Activated CD8-positive, alpha-beta memory T cell treated with anti-CD3 and anti-CD28 coated beads, Interleukin-2, amount 10 ng/mL, durations not matched to agents 7 days and 5 days (primary cell): ENCODE measurements at regions of chr12 and their contacts with region 1.

Region 1: GRCh38 chr12:52032804-52033502 is 18.3 kb upstream of the NR4A1 start:
- DNase-seq: peak; percentile 97
- ATAC-seq: peak; percentile 94
- H3K4me3 Mint-ChIP-seq: peak overlapping the region; percentile 61
- H3K27ac Mint-ChIP-seq: peak overlapping the region; percentile 64
- H3K4me1 Mint-ChIP-seq: peaks cover 24% of the 10 kb centered on the region
- H3K27me3 Mint-ChIP-seq: peaks cover 18% of the 10 kb centered on the region

Region 2: DNA sequence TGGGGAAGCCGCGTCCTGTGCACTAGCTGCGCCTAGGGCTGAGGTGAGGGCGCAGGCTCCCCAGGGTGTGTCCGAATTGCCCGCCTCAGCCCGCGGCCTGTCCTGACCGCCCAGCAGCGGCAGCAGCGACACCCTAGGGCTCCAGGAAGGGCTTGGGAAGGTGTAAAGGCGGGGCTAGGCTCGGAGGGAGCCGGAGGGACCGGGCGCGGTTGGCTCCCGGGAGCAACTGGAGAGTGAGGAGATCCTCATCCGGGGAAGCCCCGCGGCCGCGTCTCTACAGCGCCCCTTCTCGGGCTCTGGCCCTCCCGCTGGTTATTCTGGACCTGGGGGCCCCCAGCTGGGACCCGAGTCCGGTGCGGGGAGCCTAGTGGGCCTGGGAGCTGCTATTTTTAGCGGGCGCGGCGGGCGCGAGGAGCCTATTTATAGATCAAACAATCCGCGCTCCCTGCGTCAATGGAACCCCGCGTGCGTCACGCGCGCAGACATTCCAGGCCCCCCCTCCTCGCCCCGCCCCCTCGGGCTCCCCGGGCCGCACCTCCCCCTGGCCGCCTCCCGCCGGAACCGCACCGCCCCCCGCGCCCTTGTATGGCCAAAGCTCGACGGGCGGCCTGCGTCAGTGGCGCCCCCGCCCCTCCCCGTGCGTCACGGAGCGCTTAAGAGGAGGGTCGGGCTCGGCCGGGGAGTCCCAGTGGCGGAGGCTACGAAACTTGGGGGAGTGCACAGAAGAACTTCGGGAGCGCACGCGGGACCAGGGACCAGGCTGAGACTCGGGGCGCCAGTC is 18.0 kb after region 1 on chr12 and contains the start of gene NR4A1:
- CTCF ChIA-PET with region 1: interaction called, 12 read pairs
- DNase-seq: peak; percentile 97
- ATAC-seq: peak; percentile 85
- H3K4me3 Mint-ChIP-seq: peak within 1 kb of the TSS; percentile 79
- H3K27ac Mint-ChIP-seq: peak within 1 kb of the TSS; percentile 87
- H3K4me1 Mint-ChIP-seq: peaks cover 41% of the 10 kb centered on the region
- H3K27me3 Mint-ChIP-seq: peaks cover 6% of the 10 kb centered on the region
- total RNA-seq, gene NR4A1: 8.4 to 41.8 TPM

Region 3: GRCh38 chr12:52069327-52070184 is 36.6 kb after region 1 on chr12 and contains the start of gene ATG101:
- CTCF ChIA-PET with region 1: interaction called, 404 read pairs
- DNase-seq: peak; percentile 93
- ATAC-seq: peak; percentile 93
- H3K4me3 Mint-ChIP-seq: peak within 1 kb of the TSS; percentile 95
- H3K27ac Mint-ChIP-seq: peak within 1 kb of the TSS; percentile 98
- H3K4me1 Mint-ChIP-seq: peaks cover 62% of the 10 kb centered on the region
- H3K27me3 Mint-ChIP-seq: no peaks in the 10 kb centered on the region
- total RNA-seq, gene ATG101: 33.3 to 42.2 TPM

Region 4: DNA sequence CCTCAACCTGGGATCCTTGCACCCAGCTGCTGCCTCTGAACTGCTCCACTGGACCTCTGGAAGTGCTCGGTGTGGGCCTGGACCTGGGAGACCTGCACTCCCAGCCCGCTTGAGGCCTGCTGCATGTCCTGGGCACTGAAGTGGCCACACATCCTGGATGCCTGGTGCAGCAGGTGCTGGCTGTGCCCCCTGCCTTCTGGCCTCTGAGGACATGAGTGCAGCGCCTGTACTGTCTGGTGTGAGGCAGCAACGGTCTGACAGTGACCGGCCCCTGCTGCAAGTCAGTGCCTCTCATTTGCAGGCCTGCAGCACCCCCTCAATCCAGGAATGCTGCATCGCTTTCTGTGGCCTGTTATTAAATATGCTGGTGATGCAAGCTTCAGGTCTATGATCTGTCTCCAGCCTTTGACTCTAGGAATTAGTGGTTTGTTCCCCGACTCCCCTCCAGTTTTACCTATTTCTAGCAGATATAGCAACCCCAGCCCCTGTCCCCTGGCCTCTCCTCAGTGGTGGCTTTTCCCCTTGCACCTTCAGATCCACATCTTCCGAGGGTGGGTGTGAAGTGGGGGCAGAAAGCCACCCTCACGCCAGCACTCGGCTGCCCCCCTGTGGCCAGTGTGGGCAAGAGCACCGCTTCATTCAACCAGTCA is 50.2 kb after region 1 on chr12:
- CTCF ChIA-PET with region 1: interaction called, 410 read pairs
- DNase-seq: peak; percentile 75
- ATAC-seq: peak; percentile 78
- H3K4me3 Mint-ChIP-seq: no peak overlapping the region
- H3K27ac Mint-ChIP-seq: no peak overlapping the region
- H3K4me1 Mint-ChIP-seq: peaks cover 4% of the 10 kb centered on the region
- H3K27me3 Mint-ChIP-seq: peaks cover 15% of the 10 kb centered on the region

Region 5: GRCh38 chr12:52121824-52122539 is 89.0 kb after region 1 on chr12:
- CTCF ChIA-PET with region 1: interaction called, 15 read pairs
- DNase-seq: peak; percentile 75
- ATAC-seq: peak; percentile 35
- H3K4me3 Mint-ChIP-seq: no peak overlapping the region
- H3K27ac Mint-ChIP-seq: no peak overlapping the region
- H3K4me1 Mint-ChIP-seq: peaks cover 29% of the 10 kb centered on the region
- H3K27me3 Mint-ChIP-seq: peaks cover 26% of the 10 kb centered on the region

Region 6: DNA sequence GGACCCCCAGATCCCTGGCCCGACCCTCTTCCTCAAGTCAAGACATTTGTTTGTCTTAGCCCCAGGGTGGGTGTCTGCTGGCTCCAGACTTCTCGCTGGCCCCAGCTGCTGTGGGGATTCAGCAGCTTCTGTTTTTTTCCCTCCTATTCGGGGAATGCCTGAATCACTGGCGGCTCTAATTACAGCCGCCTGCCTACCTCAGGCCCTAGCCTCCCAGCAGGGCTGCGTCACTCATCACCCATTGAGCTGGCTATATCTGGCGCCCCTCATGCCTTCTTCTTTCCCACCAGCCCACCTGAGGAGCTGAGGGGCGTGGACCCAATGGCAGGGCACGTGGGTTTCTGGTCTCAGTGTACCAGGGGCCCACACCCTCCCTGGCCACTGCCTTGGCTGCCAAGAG is 148.8 kb after region 1 on chr12:
- CTCF ChIA-PET with region 1: no interaction called
- DNase-seq: no peak
- ATAC-seq: no peak
- H3K4me3 Mint-ChIP-seq: no peak overlapping the region
- H3K27ac Mint-ChIP-seq: no peak overlapping the region
- H3K4me1 Mint-ChIP-seq: peaks cover 9% of the 10 kb centered on the region
- H3K27me3 Mint-ChIP-seq: no peaks in the 10 kb centered on the region